ENCODE measurements at regions of chr2 and their contacts with region 1.

Region 1: DNA sequence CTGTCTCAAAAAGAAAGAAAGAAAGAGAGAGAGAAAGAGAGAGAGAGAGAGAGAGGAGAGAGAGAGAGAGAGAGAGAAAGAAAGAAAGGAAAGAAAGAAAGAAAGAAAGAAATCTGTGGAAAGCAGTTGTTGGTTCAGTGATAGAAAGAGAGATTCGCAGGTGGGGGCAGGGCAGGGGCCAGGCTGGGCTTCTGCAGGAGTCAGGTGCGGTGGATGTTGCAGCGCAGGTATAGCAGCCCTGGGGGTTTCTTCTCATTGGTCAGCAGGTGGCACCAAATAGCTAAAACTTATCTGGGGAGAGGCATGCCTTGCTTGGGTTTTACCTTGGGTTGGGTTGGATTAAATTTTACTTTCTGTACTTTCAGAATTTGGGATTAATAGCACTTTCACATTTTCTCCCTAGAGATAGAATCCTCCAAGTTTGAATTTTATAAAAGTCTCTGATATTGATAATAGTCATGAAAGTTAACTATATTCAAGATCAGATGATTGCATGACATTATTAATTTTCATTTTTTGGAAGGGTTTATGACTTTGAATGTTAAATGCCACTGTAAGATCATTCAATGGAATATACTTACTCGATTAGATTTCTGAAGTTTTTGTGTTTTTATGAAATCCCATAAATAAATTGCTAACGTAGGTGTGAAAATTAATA is 66.6 kb downstream of the SPTBN1 start:
- DNase-seq: no peak
- ATAC-seq: peak; percentile 55

Region 2: DNA sequence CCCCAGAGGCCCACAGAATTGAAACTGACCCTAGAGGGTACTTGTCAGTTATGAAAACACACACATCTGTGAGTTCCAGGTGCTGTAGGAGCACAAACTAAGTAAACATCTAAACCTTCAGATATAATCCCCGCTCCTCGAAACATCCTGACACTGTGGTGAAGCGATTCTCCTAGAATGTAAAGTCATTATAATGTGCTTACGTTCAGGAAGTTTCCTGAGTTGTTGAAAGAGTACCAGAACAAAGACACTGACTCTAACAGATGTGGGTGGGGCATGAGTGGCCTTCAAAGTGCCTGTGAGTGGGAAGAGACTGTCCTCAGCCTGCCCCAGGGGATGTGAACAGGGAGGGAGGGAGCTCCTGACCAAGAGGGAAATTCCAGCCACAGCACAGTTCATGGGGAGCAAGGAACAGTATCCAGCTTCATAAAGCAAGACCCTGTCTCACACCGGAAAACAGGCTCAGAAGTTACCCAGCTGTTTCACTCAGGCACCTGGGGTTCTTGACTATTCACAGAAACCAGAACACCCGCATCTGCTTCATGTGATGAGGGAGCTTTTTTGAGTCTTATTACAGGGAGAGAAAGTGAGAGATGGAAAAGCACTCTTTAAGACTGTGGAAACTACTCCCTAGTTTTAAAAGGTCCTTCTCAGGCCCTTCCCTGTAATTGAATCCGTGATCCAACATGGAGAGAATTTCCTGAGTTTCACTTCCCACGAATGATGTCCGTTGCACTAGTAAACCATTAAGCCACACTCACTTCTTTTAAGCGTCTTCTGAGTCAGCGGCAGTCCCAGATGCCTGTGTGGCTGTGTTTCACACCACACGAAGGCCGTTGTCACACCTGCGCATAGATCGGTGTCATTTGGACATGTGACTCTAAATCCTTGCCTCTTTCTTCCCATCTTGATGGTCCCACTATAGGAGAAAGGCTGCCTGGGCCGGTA is 112.1 kb after region 1 on chr2:
- intact Hi-C with region 1: loop called (anchors 10 kb)
- DNase-seq: peak; percentile 59
- ATAC-seq: peak; percentile 48

Measured in Right ventricle myocardium superior (tissue), 1 donor.